Endothelial cell of umbilical vein (primary cell): ENCODE measurements at regions of chr6 and their contacts with region 1.

Region 1: DNA sequence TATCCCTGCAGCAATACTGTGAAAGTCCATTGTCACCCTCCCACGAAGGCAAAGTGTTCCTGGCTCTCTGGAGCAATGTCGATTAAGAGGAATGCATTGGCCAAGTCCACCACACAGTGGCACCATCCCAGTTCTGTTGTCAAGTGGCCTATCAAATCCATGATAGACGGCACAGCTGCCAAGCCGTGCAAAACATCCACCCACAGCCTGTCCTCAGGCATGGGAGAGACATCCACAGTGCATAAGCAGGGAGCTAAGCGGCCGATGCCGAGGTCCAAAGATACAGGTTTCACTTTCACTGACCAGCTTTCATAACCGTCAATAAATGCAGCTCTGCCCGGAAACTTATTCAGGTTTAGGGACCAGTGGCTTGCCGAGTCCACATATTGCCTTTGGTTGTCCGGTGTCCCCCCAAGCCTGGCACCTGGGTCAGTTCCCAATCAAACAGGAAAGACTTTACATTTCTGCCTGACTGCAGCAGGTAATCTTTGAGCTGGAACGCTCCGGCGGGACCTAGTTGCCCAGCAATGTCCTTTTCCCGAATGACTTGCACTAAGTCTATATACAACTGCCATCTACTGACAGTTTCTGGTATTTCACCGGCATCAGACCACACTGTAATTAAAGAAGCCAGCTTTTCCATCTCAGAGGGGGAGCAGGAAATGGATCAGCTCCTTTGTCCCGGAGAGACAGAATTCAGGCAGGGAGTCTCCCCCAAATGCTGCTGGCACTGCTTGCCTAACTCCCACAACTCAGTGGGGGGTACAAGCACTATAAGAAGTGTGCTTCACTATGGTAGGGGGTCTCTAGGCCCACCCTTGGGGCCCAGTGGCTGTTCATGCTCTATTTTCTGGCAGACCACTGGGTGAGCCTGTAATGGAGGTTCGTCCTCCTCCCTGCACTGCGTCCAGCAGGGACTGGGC is 6.3 kb downstream of the ZKSCAN3 start:
- DNase-seq: peak; percentile 93
- H3K4me3 ChIP-seq: peak overlapping the region; percentile 52 to 84 (median 55)
- H3K27ac ChIP-seq: peak overlapping the region; percentile 60
- H3K4me1 ChIP-seq: peaks cover 36% of the 10 kb centered on the region
- H3K27me3 ChIP-seq: no peaks in the 10 kb centered on the region
- CTCF ChIP-seq: peak; percentile 66 to 73
- POLR2A ChIP-seq: peak; percentile 40

Region 2: GRCh38 chr6:27902335-27903314 is 453.4 kb before region 1 on chr6:
- CTCF ChIA-PET with region 1: interaction called, 49 read pairs
- POLR2A ChIA-PET with region 1: no interaction called
- dilution Hi-C with region 1: no loop called
- intact Hi-C with region 1: loop called (anchors 1 kb)
- DNase-seq: peak; percentile 92
- H3K4me3 ChIP-seq: peak overlapping the region; percentile 39 to 91 (median 86)
- H3K27ac ChIP-seq: peak overlapping the region; percentile 37
- H3K4me1 ChIP-seq: no peaks in the 10 kb centered on the region
- H3K27me3 ChIP-seq: peaks cover 0 to 11% of the 10 kb centered on the region in 2 experiments
- CTCF ChIP-seq: no peak
- POLR2A ChIP-seq: no peak

Region 3: GRCh38 chr6:28212510-28213212 is 143.3 kb before region 1 on chr6:
- CTCF ChIA-PET with region 1: interaction called, 4 read pairs
- POLR2A ChIA-PET with region 1: interaction called, 5 read pairs
- dilution Hi-C with region 1: no loop called
- intact Hi-C with region 1: loop called (anchors 5 kb)
- DNase-seq: peak; percentile 90
- H3K4me3 ChIP-seq: peak overlapping the region; percentile 31 to 69 (median 62)
- H3K27ac ChIP-seq: no peak overlapping the region
- H3K4me1 ChIP-seq: peaks cover 14% of the 10 kb centered on the region
- H3K27me3 ChIP-seq: peaks cover 31 to 67% of the 10 kb centered on the region in 2 experiments
- CTCF ChIP-seq: no peak
- POLR2A ChIP-seq: no peak

Region 4: GRCh38 chr6:28266962-28267694 is 88.9 kb before region 1 on chr6 and contains the start of gene ZSCAN26:
- CTCF ChIA-PET with region 1: interaction called, 17 read pairs
- POLR2A ChIA-PET with region 1: interaction called, 3 read pairs
- dilution Hi-C with region 1: no loop called
- intact Hi-C with region 1: no loop called
- DNase-seq: peak; percentile 92
- H3K4me3 ChIP-seq: peak within 1 kb of the TSS; percentile 73 to 96 (median 85)
- H3K27ac ChIP-seq: peak within 1 kb of the TSS; percentile 71
- H3K4me1 ChIP-seq: peaks cover 35% of the 10 kb centered on the region
- H3K27me3 ChIP-seq: peaks cover 0 to 3% of the 10 kb centered on the region in 2 experiments
- CTCF ChIP-seq: no peak
- POLR2A ChIP-seq: peak; percentile 81
- total RNA-seq, gene ZSCAN26: 12.7 and 14.1 TPM in 2 replicates

Region 5: GRCh38 chr6:28371706-28372451 is 15.9 kb after region 1 on chr6:
- CTCF ChIA-PET with region 1: interaction called, 12 read pairs
- POLR2A ChIA-PET with region 1: no interaction called
- dilution Hi-C with region 1: no loop called
- intact Hi-C with region 1: no loop called
- DNase-seq: no peak
- H3K4me3 ChIP-seq: no peak overlapping the region
- H3K27ac ChIP-seq: no peak overlapping the region
- H3K4me1 ChIP-seq: no peaks in the 10 kb centered on the region
- H3K27me3 ChIP-seq: no peaks in the 10 kb centered on the region
- CTCF ChIP-seq: no peak
- POLR2A ChIP-seq: no peak